A549 (cell line): ENCODE measurements at regions of chr10 and their contacts with region 1.

Region 1: DNA sequence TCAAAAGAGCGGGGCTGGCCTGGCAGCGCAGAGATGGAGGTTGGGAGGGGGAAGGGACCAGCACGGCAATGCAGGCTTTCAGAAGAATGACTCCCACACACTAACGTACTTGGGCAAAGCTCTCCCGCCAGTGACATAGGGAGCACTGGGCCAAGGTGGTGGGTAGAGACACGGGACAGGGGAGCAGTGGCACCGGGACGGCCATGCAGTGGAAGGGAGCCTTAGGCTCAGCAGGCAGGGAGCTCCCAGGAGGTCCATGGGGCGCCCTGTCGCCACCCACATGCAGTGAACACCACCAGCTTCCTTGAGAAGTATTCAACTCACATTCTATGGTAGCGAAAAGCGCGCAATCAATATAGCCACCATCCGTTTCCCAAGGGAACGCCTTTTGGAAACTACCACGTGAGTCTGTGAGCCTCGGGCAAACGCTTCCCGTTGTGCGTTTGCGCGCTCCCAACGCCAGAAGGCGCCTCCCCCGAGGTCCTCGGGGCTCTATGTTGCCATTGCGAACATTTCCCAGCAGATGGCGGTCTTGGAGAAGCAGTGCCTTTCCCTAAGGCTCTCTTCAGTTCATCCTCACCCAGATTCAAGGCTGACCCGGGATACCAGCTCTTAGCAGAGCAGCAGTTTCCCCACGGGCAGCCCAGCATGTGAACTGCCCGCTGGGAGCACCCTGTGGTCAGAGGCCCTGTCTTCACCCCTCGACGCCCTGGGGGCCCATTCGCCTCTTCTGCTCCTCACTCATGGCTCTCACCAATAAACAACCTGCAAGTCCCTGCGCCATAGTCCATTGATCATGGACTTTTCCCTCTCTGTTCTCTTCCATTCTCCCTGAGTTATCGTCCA is 16.4 kb upstream of the OPALIN start:
- DNase-seq: peak; percentile 87 to 97
- ATAC-seq: peak; percentile 79 to 93
- H3K4me3 ChIP-seq: peak overlapping the region; percentile 42
- H3K27ac ChIP-seq: peak overlapping the region; percentile 59 to 82
- H3K4me1 ChIP-seq: peaks cover 2% of the 10 kb centered on the region; the same call in 1 of the 3 replicates
- CTCF ChIP-seq: peak; percentile 94
- EP300 ChIP-seq: no peak
- POLR2A ChIP-seq: peak; percentile 30
- RAD21 ChIP-seq: peak; percentile 84 to 86

Region 2: DNA sequence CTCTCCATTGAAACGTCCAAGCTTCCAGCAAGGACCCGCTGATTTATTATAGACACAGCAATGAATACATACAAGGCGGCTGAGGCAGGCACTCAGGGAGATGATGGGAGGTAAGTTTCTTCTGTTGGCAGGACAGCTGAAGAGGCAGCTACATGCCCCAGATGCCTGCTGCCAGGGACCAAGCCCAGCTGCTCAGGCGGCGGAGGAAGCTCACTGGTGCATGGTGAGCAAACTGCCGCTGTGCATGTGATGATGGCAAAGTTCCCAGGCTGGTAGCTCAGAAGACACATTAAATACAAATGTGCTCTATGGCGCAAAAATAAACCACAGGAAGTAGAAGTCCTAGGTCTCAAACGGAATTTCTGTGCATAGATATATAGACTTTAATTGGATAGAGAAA is 68.7 kb before region 1 on chr10:
- CTCF ChIA-PET with region 1: no interaction called
- POLR2A ChIA-PET with region 1: no interaction called
- DNase-seq: no peak
- ATAC-seq: no peak
- H3K4me3 ChIP-seq: no peak overlapping the region
- H3K27ac ChIP-seq: no peak overlapping the region
- H3K4me1 ChIP-seq: no peaks in the 10 kb centered on the region
- CTCF ChIP-seq: no peak
- EP300 ChIP-seq: no peak
- POLR2A ChIP-seq: no peak
- RAD21 ChIP-seq: no peak

Region 3: DNA sequence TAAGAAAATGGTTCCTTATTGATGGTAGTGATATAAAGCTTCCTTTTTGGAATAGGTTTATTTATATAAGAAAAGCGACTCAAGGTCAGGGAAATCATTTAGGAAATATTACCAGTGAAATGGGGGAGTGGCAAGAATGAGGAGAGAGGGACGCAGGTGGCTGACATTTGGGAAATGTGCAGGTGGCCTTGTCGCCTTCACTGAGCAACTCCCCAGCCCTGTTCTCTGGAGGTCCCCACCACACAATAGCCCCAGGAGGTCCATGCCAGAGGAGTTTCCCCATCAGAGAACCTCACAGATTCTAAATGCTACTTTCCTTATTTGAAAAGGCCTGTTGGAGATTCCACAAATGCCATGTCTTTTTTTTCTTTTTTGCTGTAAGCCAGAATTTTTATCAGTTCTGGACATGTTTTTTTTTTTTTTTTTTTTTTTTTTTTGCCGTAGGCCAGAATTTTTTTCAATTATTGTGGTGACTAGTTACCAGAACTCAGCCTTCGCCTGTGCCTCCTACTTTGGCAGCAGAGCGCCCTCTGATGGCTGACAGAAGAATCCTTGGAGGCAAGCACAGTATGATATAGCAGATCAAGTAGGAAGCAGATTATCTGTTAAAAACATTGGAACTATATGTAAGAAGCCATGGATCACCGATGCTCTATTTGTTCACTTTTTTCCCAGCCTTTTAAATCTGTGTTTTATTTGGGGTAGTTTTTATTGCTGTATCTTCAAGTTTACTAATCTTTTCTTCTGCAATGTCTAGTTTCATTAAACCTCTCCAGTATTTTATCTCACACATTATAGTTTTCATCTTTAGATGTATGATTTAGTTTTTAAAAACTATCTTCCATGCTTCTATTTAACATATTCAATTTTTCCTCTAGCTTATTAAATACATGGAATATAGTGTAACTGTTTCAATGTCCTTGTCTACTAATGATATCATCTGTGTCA is 35.0 kb before region 1 on chr10:
- CTCF ChIA-PET with region 1: interaction called, 15 read pairs
- POLR2A ChIA-PET with region 1: no interaction called
- DNase-seq: peak; percentile 36 to 71
- ATAC-seq: peak; percentile 67 to 93; a peak in 4 of 6 replicates
- H3K4me3 ChIP-seq: no peak overlapping the region
- H3K27ac ChIP-seq: no peak overlapping the region
- H3K4me1 ChIP-seq: no peaks in the 10 kb centered on the region
- CTCF ChIP-seq: peak; percentile 61
- EP300 ChIP-seq: no peak
- POLR2A ChIP-seq: no peak
- RAD21 ChIP-seq: peak; percentile 39 to 58; a peak in 3 of 5 replicates

Region 4: DNA sequence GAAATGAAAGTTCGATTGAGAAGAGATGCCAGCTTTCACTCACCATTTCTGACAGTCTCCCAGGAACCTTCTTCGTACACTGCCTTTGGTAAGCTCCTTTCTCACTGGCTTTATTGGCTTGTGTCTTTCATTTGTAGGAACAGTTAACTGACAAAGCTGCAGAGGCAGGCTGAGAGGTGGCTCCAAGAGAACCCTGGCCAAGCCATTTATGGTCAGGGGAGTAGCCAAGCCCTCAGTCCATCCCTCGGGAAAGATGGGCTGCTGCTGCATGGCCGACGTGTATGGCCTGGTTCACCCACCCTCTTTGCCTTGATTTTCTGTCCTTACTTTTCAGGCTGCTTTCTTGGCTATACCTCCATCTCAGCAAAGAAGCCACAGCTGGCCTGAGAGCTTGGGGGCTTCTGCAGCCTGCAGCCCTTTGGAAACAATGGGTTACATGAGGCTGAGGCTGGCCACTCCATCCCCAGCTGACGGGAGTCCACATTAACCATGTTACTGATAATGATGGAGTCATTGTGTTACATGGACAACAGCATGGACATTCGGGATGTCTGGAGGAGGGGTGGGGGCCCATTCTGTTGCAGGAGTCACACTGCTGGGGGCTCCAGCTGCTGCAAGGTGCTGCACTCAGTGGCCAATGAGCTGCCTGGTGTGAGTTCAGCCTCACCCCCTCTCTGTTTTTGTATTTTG is 16.2 kb before region 1 on chr10 and contains the start of gene OPALIN:
- CTCF ChIA-PET with region 1: interaction called, 22 read pairs
- POLR2A ChIA-PET with region 1: interaction called, 8 read pairs
- DNase-seq: no peak
- ATAC-seq: no peak
- H3K4me3 ChIP-seq: no peak within 1 kb of the TSS
- H3K27ac ChIP-seq: no peak within 1 kb of the TSS
- H3K4me1 ChIP-seq: no peaks in the 10 kb centered on the region
- CTCF ChIP-seq: no peak
- EP300 ChIP-seq: no peak
- POLR2A ChIP-seq: no peak
- RAD21 ChIP-seq: no peak
- polyA plus RNA-seq, gene OPALIN: not detected in 2 replicates

Region 5: DNA sequence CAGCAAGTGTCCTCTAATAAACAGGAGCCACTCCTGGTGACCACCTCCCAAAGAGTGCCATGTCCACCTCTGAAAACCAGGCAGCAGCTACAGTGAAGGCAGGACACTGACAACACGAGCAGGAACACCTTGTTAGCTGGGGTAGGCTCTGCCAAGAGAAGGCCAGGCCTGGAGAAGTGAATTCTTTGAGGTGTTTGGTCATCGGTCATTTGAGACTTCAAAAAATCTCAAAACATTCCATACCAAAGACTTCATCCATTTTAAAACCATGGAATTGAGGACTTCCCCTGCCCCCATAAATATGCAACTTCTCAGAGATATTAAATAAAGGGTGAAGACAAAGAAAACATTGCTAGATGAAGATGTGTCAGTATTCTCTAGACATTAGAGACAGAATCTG is 12.0 kb after region 1 on chr10:
- CTCF ChIA-PET with region 1: interaction called, 105 read pairs
- POLR2A ChIA-PET with region 1: interaction called, 3 read pairs
- DNase-seq: no peak
- ATAC-seq: no peak
- H3K4me3 ChIP-seq: no peak overlapping the region
- H3K27ac ChIP-seq: no peak overlapping the region
- H3K4me1 ChIP-seq: no peaks in the 10 kb centered on the region
- CTCF ChIP-seq: no peak
- EP300 ChIP-seq: no peak
- POLR2A ChIP-seq: no peak
- RAD21 ChIP-seq: no peak

Region 6: GRCh38 chr10:96395931-96396877 is 21.0 kb after region 1 on chr10:
- CTCF ChIA-PET with region 1: interaction called, 105 read pairs
- POLR2A ChIA-PET with region 1: no interaction called
- DNase-seq: peak; percentile 73 to 91
- ATAC-seq: peak; percentile 91 to 96
- H3K4me3 ChIP-seq: no peak overlapping the region
- H3K27ac ChIP-seq: no peak overlapping the region
- H3K4me1 ChIP-seq: no peaks in the 10 kb centered on the region
- CTCF ChIP-seq: peak; percentile 83
- EP300 ChIP-seq: no peak
- POLR2A ChIP-seq: no peak
- RAD21 ChIP-seq: peak; percentile 89 to 90

Region 7: GRCh38 chr10:96402417-96403305 is 27.5 kb after region 1 on chr10:
- CTCF ChIA-PET with region 1: interaction called, 105 read pairs
- POLR2A ChIA-PET with region 1: no interaction called
- DNase-seq: no peak
- ATAC-seq: peak in 1 of 2 experiments; percentile 66; a peak in 3 of 6 replicates
- H3K4me3 ChIP-seq: no peak overlapping the region
- H3K27ac ChIP-seq: no peak overlapping the region
- H3K4me1 ChIP-seq: no peaks in the 10 kb centered on the region
- CTCF ChIP-seq: no peak
- EP300 ChIP-seq: no peak
- POLR2A ChIP-seq: no peak
- RAD21 ChIP-seq: no peak

Region 8: DNA sequence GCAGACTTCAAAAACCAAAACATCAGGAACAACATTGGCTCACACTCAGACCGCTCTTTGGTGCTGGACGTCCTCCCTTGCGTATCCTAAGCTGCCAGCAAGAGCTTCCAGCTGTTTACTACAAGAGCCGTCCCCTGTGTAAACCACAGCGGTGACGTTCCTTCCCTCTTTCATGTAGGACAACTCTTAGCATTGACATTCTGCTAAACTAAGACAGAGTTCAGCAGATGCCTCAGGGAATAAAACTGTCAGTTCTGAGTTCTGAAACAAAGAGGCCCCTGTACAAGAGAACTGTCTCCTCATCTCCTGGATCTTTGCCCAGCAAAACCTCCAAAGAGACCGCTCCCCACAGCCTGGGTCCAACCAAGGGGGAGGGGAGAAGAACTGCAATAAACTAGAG is 41.4 kb after region 1 on chr10:
- CTCF ChIA-PET with region 1: interaction called, 11 read pairs
- POLR2A ChIA-PET with region 1: no interaction called
- DNase-seq: no peak
- ATAC-seq: no peak
- H3K4me3 ChIP-seq: no peak overlapping the region
- H3K27ac ChIP-seq: no peak overlapping the region
- H3K4me1 ChIP-seq: no peaks in the 10 kb centered on the region
- CTCF ChIP-seq: no peak
- EP300 ChIP-seq: no peak
- POLR2A ChIP-seq: no peak
- RAD21 ChIP-seq: no peak

Region 9: GRCh38 chr10:97427525-97428179 is 1052.4 kb after region 1 on chr10:
- CTCF ChIA-PET with region 1: no interaction called
- POLR2A ChIA-PET with region 1: no interaction called
- DNase-seq: peak in 1 of 2 experiments; percentile 40
- ATAC-seq: peak in 1 of 2 experiments; percentile 19; a peak in 3 of 6 replicates
- H3K4me3 ChIP-seq: peak overlapping the region; percentile 73
- H3K27ac ChIP-seq: peak overlapping the region; percentile 82 to 90
- H3K4me1 ChIP-seq: peaks cover 17% of the 10 kb centered on the region; the same call in 2 of the 3 replicates
- CTCF ChIP-seq: no peak
- EP300 ChIP-seq: no peak
- POLR2A ChIP-seq: no peak
- RAD21 ChIP-seq: no peak